HCT116 (cell line): ENCODE measurements at regions of chr13 and their contacts with region 1.

Region 1: DNA sequence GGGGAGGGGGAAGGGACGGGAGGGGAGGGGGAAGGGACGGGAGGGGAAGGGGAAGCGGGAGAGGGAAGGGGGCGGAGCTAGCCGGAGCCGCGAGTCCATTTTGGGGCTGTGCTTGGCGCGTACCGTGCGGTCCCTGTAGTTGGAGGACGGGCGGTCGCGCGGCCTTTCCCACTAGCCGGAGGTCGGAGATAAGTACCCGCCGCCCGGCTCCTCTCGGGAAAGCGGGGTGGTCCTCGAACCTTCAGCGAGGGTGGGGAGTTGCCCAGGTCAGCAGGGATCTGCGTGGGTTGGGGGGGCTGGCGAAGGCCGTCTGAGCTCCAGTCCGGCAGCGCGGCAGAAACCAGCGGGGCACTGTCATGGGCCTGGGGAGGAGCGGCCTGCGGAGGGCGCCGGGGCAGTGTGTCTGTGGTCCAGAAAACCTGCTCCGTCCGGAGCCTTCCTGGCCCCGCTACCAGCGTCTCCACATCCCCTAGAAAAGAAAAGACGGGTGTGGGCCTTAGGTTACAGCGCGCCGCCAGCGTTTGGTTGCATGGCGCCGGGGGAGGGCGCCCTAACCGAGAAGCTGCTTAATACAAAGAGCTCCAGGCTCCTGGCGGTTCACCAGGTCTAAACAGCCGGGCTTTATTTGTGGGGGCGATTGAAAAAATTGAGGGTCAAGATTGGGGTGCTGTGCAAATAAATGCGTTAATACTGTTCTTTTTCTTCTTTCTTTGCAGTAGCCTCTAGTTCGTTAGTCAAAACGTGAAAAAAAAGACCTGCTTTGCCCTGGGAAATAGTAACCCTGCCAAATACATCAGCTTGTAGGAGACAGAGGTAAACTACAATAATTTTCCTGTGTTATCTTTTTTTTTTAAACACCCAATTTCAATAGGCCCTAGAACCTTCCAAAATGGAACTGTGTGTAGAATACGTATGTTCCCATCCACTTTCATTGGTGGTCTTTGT is at the start of gene TRIM13:
- DNase-seq: peak; percentile 71
- ATAC-seq: peak; percentile 82
- H3K4me3 ChIP-seq: peak within 1 kb of the TSS; percentile 80 to 84
- H3K27ac ChIP-seq: peak within 1 kb of the TSS; percentile 99
- H3K4me1 ChIP-seq: peaks cover 5 to 19% of the 10 kb centered on the region in 2 experiments; a peak in 3 of 4 replicates
- H3K27me3 ChIP-seq: no peaks in the 10 kb centered on the region
- CTCF ChIP-seq: peak; percentile 64 to 83 (median 76); a peak in 5 of 6 replicates
- POLR2A ChIP-seq: no peak
- RAD21 ChIP-seq: peak; percentile 70
- total RNA-seq, gene TRIM13: 24.6 TPM

Region 2: DNA sequence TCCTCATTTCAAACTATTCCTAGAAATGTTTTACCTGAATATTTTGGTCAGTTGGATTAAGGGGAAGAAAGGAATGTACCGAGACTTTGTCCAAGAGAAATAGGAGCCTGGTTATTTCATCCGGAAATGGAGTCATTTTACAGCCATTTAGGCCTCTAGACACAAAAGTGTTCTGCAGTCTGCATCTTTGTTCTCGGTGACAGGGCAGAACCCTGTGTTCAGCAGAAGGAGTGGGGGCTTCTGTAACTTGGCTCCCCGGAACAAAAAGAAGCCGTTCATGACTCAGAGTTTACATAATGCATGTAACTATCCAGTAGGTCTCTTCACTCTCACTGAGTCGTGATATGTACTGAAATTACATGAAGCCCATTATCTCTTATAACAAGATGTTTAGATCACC is 1043.1 kb before region 1 on chr13:
- CTCF ChIA-PET with region 1: no interaction called
- POLR2A ChIA-PET with region 1: no interaction called
- RAD21 ChIA-PET with region 1: no interaction called
- intact Hi-C with region 1: no loop called
- DNase-seq: no peak
- ATAC-seq: no peak
- H3K4me3 ChIP-seq: no peak overlapping the region
- H3K27ac ChIP-seq: no peak overlapping the region
- H3K4me1 ChIP-seq: peaks cover 0 to 4% of the 10 kb centered on the region in 2 experiments; a peak in 1 of 4 replicates
- H3K27me3 ChIP-seq: no peaks in the 10 kb centered on the region
- CTCF ChIP-seq: no peak
- POLR2A ChIP-seq: no peak
- RAD21 ChIP-seq: no peak

Region 3: GRCh38 chr13:49669735-49670309 is 327.4 kb before region 1 on chr13:
- CTCF ChIA-PET with region 1: no interaction called
- POLR2A ChIA-PET with region 1: no interaction called
- RAD21 ChIA-PET with region 1: no interaction called
- intact Hi-C with region 1: loop called (anchors 10 kb)
- DNase-seq: peak; percentile 63
- ATAC-seq: peak; percentile 99
- H3K4me3 ChIP-seq: no peak overlapping the region
- H3K27ac ChIP-seq: no peak overlapping the region
- H3K4me1 ChIP-seq: peaks cover 0 to 11% of the 10 kb centered on the region in 2 experiments; a peak in 2 of 4 replicates
- H3K27me3 ChIP-seq: no peaks in the 10 kb centered on the region
- CTCF ChIP-seq: peak; percentile 74 to 92 (median 81)
- POLR2A ChIP-seq: no peak
- RAD21 ChIP-seq: peak; percentile 94

Region 4: GRCh38 chr13:49936085-49936940 is 60.9 kb before region 1 on chr13 and contains the start of gene SPRYD7:
- CTCF ChIA-PET with region 1: interaction called, 15 read pairs
- POLR2A ChIA-PET with region 1: no interaction called
- RAD21 ChIA-PET with region 1: no interaction called
- intact Hi-C with region 1: no loop called
- DNase-seq: peak; percentile 97
- ATAC-seq: peak; percentile 96
- H3K4me3 ChIP-seq: peak within 1 kb of the TSS; percentile 72 to 79
- H3K27ac ChIP-seq: peak within 1 kb of the TSS; percentile 80
- H3K4me1 ChIP-seq: peaks cover 0 to 16% of the 10 kb centered on the region in 2 experiments; a peak in 2 of 4 replicates
- H3K27me3 ChIP-seq: no peaks in the 10 kb centered on the region
- CTCF ChIP-seq: peak; percentile 80 to 92 (median 85)
- POLR2A ChIP-seq: no peak
- RAD21 ChIP-seq: peak; percentile 42
- total RNA-seq, gene SPRYD7: 11.3 TPM

Region 5: DNA sequence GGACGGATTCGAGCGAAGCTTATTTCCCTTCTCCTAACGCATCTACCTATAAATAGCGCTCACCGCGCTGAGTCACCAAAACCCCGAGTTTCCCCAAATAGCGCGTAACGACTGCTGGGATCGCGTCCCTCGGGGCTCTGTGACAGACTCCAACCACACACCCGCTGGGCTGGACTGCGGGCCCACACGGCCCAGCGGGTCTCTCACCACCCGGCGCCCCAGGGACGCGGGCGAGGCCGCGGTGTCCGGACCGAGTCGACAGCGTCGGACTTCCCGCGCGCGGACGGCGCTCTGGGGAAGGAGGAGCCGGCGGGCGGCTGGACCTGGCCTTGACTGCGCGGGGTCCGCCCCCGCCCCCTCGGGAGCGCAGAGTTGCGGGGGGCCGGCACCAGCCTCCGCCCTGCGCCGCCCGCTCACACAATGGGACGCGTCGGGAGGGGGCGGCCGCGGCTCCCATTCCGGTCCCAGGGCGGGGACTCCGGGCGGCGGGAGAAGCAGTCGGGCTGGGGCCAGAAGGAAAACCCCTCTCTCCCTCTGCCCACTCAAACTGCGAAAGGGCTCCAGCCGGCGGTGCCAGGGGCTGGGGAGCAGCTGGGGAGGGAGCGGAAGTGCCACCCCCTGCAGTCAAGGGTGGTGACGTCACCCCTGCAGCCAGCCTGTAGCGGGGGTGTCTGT is 126.8 kb after region 1 on chr13:
- CTCF ChIA-PET with region 1: no interaction called
- POLR2A ChIA-PET with region 1: interaction called, 3 read pairs
- RAD21 ChIA-PET with region 1: interaction called in 1 of 2 experiments, 4 read pairs
- intact Hi-C with region 1: loop called (anchors 10 kb)
- DNase-seq: peak; percentile 84
- ATAC-seq: peak; percentile 77
- H3K4me3 ChIP-seq: peak overlapping the region; percentile 52 to 76
- H3K27ac ChIP-seq: peak overlapping the region; percentile 99
- H3K4me1 ChIP-seq: peaks cover 17 to 34% of the 10 kb centered on the region in 2 experiments
- H3K27me3 ChIP-seq: no peaks in the 10 kb centered on the region
- CTCF ChIP-seq: 0 out of 6 replicates have a peak, but pooled peaks of 1 of the 3 experiments have one; percentile 3
- POLR2A ChIP-seq: peak; percentile 34
- RAD21 ChIP-seq: no peak

Region 6: DNA sequence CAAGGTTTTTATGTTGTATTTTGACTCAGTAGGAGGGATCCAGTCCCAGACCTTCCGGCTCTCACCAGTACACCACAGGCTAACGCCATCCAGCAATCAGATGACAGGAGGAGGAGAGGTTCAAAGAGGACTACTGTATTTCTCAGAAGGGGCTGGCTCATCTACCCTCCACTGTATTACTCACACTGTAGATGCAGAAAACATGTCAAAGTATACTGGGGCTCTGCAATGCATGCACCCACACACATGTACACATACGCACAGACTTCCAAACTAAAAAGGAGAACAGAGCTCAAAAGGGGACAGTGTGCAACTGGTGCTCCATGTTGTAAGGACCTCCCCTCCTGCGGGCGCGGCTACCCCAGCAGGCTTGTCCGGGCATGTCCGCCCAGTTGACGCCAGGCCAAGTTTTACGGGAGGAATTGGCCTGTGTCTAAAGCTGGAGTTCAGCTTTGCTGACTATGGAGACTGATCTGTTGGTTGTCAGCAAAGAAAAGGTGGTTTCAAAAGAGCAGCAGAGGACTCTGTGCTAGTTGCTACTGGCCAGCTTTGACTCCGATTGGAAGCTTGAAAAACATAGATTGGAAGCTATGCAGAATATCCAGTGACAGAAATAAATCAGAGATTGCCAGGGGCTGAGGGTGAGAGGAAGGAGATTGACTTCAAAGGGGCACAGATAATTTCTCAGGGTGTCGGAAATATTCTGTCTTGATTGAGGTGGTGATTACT is 532.1 kb after region 1 on chr13:
- CTCF ChIA-PET with region 1: interaction called, 5 read pairs
- POLR2A ChIA-PET with region 1: no interaction called
- RAD21 ChIA-PET with region 1: no interaction called
- intact Hi-C with region 1: loop called (anchors 5 kb)
- DNase-seq: peak; percentile 65
- ATAC-seq: peak; percentile 94
- H3K4me3 ChIP-seq: peak overlapping the region; percentile 7 to 41; a peak in 3 of 4 replicates
- H3K27ac ChIP-seq: peak overlapping the region; percentile 92
- H3K4me1 ChIP-seq: peaks cover 29 to 32% of the 10 kb centered on the region in 2 experiments
- H3K27me3 ChIP-seq: no peaks in the 10 kb centered on the region
- CTCF ChIP-seq: no peak
- POLR2A ChIP-seq: no peak
- RAD21 ChIP-seq: no peak

Region 7: GRCh38 chr13:50911937-50912795 is 914.9 kb after region 1 on chr13:
- CTCF ChIA-PET with region 1: interaction called, 16 read pairs
- POLR2A ChIA-PET with region 1: interaction called, 4 read pairs
- RAD21 ChIA-PET with region 1: interaction called in 1 of 2 experiments, 3 read pairs
- intact Hi-C with region 1: loop called (anchors 5 kb)
- DNase-seq: peak; percentile 80
- ATAC-seq: peak; percentile 18; the same call in 1 of the 2 replicates
- H3K4me3 ChIP-seq: no peak overlapping the region
- H3K27ac ChIP-seq: no peak overlapping the region
- H3K4me1 ChIP-seq: peaks cover 12 to 25% of the 10 kb centered on the region in 2 experiments; a peak in 3 of 4 replicates
- H3K27me3 ChIP-seq: no peaks in the 10 kb centered on the region
- CTCF ChIP-seq: peak; percentile 63 to 88 (median 87); a peak in 5 of 6 replicates
- POLR2A ChIP-seq: no peak
- RAD21 ChIP-seq: peak; percentile 81